ENCODE measurements at regions of chr2 and their contacts with region 1.

Region 1: GRCh38 chr2:44981136-44982108 is 27.8 kb downstream of the SIX2 start:
- DNase-seq: peak; percentile 71
- H3K4me3 Mint-ChIP-seq: no peak overlapping the region
- H3K27ac Mint-ChIP-seq: no peak overlapping the region
- H3K4me1 Mint-ChIP-seq: no peaks in the 10 kb centered on the region
- H3K27me3 Mint-ChIP-seq: peaks cover 10% of the 10 kb centered on the region

Region 2: DNA sequence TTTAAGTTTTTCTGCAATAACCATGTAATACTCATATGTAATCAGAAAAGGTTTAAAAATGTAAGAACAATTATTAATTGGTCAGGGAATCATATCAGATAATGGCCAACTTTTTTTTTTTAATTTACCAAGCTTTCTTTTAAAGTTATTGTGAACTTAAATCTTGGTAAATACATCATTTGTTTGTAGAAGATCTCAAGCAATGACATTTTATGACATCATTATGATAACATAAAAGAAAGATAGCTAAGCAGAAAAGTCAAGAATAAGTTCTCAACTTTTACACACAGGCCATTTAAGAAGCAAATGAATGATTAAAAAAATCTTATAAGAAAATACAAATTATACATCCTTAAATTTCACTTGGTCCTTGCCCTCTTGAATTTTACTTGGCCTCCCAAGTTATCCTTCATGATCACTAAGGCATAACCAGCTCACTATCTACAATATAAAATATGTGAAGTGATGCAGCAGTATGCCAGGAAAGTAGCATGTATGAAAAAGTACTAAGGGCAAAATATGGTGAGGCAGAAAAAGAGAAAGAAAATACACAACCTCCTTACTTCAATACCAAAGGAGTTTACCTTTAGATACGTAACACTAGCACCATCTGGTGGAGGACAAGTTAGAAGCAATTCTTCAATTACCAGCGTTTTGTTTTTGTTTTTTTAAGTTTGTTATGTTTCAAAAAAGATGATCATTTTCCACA is 513.0 kb after region 1 on chr2:
- CTCF ChIA-PET with region 1: interaction called, 13 read pairs
- POLR2A ChIA-PET with region 1: no interaction called
- DNase-seq: peak; percentile 52
- H3K4me3 Mint-ChIP-seq: no peak overlapping the region
- H3K27ac Mint-ChIP-seq: no peak overlapping the region
- H3K4me1 Mint-ChIP-seq: peaks cover 16% of the 10 kb centered on the region
- H3K27me3 Mint-ChIP-seq: no peaks in the 10 kb centered on the region

Measured in activated CD4-positive, alpha-beta T cell treated with anti-CD3 and anti-CD28 coated beads, Interleukin-2, amount 10 ng/mL, durations not matched to agents 7 days and 5 days (primary cell).